IMR-90 (cell line): ENCODE measurements at regions of chr4 and their contacts with region 1.

Region 1: DNA sequence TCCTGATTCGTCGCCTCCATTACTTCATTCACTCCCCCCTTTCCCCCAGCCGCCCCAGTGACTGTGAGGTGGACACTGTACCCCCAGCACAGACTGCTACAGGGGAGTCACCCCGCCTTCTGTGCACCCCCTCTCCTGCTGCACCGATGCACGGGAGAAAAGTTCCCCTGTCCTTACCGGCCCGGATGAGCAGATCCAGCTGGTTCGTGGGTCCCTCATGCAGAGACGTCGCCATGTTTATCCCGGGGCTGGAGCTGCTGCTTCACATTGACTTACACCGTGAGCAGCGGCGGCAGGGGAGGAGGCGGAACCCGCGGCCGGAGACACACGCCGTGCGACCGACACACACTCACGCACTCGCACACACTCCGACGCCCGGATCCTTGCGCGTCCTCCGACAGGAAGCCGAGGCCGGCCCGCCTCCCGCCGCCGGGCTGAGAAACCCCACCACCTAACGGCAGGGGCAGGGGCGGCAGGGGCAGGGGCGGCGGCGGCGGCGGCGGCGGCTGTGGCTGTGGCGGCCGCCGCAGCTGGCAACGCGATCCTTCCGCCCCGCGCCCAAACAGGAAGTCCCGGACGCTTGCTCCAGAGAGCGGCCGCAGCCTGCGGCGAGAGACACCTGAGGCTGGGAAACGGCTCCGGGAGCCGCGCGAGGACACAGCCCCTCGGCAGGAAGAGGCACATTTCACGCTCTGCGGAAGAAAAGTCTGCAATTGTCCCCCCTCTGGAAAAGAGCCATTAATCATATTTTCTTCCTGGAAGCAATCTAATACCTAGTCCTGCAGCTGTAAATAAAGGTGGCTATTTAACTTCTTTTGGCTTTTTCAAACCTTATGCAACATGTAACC is 68.6 kb downstream of the NOCT start:
- DNase-seq: peak; percentile 90
- ATAC-seq: peak; percentile 72
- H3K4me3 ChIP-seq: peak overlapping the region; percentile 99
- H3K27ac ChIP-seq: peak overlapping the region; percentile 94
- H3K4me1 ChIP-seq: no peaks in the 10 kb centered on the region
- H3K27me3 ChIP-seq: no peaks in the 10 kb centered on the region
- CTCF ChIP-seq: peak; percentile 10; the same call in 1 of the 2 replicates
- POLR2A ChIP-seq: 0 out of 2 replicates have a peak, but pooled peaks have one; percentile 10
- RAD21 ChIP-seq: no peak

Region 2: DNA sequence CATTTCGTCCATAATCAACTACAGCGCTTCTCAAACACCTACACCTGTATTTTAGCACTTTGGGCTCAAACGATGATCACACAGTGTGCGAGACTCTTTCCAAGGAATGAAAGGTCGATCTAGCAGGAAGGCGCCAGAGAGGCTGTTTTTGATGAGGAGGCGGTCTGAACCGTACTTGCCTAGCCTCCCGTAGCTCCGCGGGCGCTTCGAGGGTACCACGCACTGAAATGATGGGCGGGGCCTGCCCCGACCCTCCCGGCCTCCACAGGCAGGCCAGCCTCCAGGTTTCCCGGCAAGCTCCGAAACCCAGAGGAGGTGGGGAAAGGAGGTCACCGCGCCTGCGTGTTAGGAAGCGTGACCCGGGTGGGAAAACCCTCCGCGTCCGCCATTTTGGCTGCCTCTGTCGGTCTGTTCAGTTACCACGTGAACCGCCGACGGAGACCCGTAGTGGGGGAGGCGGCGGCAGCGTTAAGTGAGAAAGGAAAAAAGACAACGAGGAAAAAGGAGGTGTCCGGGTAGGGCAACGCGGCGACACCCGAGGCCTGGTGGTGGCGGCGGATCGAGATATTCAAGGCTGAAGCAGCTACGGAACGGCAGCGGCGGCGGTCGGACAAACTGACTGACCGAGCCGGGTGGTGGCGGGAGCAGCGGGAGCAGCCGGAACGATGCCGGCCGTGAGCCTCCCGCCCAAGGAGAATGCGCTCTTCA is 217.1 kb after region 1 on chr4 and contains the start of gene NAA15:
- CTCF ChIA-PET with region 1: no interaction called
- POLR2A ChIA-PET with region 1: no interaction called
- dilution Hi-C with region 1: no loop called
- in situ Hi-C with region 1: no loop called
- intact Hi-C with region 1: loop called (anchors 5 kb)
- DNase-seq: peak; percentile 97
- ATAC-seq: peak; percentile 93
- H3K4me3 ChIP-seq: peak within 1 kb of the TSS; percentile 75
- H3K27ac ChIP-seq: peak within 1 kb of the TSS; percentile 86
- H3K4me1 ChIP-seq: peaks cover 5% of the 10 kb centered on the region
- H3K27me3 ChIP-seq: no peaks in the 10 kb centered on the region
- CTCF ChIP-seq: no peak
- POLR2A ChIP-seq: peak; percentile 77
- RAD21 ChIP-seq: no peak
- total RNA-seq, gene NAA15: 43.4 and 106 TPM in 2 replicates